ENCODE measurements at regions of chr22 and their contacts with region 1.

Region 1: GRCh38 chr22:35430897-35431322 is 31.0 kb downstream of the MCM5 start:
- DNase-seq: peak; percentile 93
- ATAC-seq: peak; percentile 81
- H3K4me3 Mint-ChIP-seq: no peak overlapping the region
- H3K27ac Mint-ChIP-seq: no peak overlapping the region
- H3K4me1 Mint-ChIP-seq: peaks cover 11% of the 10 kb centered on the region
- H3K27me3 Mint-ChIP-seq: no peaks in the 10 kb centered on the region
- CTCF ChIP-seq: peak; percentile 97

Region 2: DNA sequence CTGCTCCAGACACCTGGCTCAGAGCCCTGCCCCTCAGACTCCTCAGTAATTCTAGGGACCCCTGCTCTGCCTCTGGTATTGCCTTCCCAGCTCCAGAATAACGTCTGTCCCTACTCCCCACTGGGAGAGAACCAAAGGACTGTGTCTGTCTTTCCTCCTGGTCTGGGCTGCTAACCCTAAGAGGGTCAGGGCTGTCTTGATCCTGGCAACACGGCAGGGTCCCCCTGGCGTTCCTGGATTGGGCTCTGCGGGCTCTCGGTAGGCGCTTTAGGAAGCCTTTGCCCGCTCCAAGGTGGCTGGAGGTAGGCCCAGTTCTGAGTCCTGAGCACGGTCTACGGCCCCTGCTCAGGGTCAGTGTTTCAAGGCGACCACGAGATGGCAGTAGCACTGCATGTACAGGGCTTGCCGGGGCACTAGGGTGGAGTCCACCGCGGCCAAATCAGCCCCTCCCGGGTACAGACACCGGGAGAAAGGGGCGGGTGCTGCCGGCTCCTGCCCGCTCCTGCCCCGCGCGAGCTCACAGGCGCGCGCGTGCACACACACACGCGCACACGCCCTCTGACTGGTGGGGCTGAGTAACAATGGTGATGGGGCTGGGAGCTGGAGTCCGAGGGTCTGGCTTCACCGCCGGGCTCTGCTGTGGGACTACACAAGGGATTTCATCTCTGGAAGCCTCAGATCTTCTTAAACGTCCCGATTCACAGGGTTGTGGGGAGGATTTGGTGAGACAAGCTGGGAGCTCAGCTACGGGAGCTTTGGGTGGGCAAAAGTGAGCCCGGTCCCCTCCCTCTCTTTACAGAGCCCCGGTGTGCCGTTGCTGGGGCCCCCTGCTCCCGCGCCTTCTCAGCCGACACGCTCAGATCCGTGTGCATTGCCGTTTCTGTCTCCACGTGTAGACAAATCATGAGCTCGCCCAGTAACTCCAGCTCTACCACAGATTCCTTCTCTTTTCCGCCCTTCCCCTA is 80.1 kb before region 1 on chr22:
- CTCF ChIA-PET with region 1: interaction called, 19 read pairs
- POLR2A ChIA-PET with region 1: no interaction called
- DNase-seq: peak; percentile 94
- ATAC-seq: peak; percentile 92
- H3K4me3 Mint-ChIP-seq: peak overlapping the region; percentile 76
- H3K27ac Mint-ChIP-seq: no peak overlapping the region
- H3K4me1 Mint-ChIP-seq: peaks cover 18% of the 10 kb centered on the region
- H3K27me3 Mint-ChIP-seq: peaks cover 10% of the 10 kb centered on the region; the same call in 1 of the 2 replicates
- CTCF ChIP-seq: peak; percentile 78

Region 3: DNA sequence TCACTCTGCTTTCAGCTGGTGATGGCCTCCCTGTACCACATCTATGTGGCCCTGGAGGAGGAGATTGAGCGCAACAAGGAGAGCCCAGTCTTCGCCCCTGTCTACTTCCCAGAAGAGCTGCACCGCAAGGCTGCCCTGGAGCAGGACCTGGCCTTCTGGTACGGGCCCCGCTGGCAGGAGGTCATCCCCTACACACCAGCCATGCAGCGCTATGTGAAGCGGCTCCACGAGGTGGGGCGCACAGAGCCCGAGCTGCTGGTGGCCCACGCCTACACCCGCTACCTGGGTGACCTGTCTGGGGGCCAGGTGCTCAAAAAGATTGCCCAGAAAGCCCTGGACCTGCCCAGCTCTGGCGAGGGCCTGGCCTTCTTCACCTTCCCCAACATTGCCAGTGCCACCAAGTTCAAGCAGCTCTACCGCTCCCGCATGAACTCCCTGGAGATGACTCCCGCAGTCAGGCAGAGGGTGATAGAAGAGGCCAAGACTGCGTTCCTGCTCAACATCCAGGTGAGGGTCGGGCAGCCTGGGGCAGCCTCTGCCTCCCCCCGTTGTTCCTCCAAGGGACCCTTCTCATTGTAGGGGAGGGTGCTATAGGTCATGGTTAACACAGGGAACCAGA is 44.1 kb before region 1 on chr22:
- CTCF ChIA-PET with region 1: no interaction called
- POLR2A ChIA-PET with region 1: interaction called, 10 read pairs
- DNase-seq: no peak
- ATAC-seq: no peak
- H3K4me3 Mint-ChIP-seq: no peak overlapping the region
- H3K27ac Mint-ChIP-seq: no peak overlapping the region
- H3K4me1 Mint-ChIP-seq: peaks cover 5% of the 10 kb centered on the region
- H3K27me3 Mint-ChIP-seq: no peaks in the 10 kb centered on the region
- CTCF ChIP-seq: no peak

Region 4: GRCh38 chr22:35539910-35540594 is 109.1 kb after region 1 on chr22:
- CTCF ChIA-PET with region 1: interaction called, 21 read pairs
- POLR2A ChIA-PET with region 1: interaction called, 3 read pairs
- DNase-seq: peak; percentile 66
- ATAC-seq: peak; percentile 70
- H3K4me3 Mint-ChIP-seq: peak overlapping the region; percentile 68
- H3K27ac Mint-ChIP-seq: no peak overlapping the region
- H3K4me1 Mint-ChIP-seq: peaks cover 36% of the 10 kb centered on the region
- H3K27me3 Mint-ChIP-seq: peaks cover 32% of the 10 kb centered on the region
- CTCF ChIP-seq: no peak

Region 5: GRCh38 chr22:35575116-35575748 is 144.3 kb after region 1 on chr22:
- CTCF ChIA-PET with region 1: interaction called, 11 read pairs
- POLR2A ChIA-PET with region 1: no interaction called
- DNase-seq: no peak
- ATAC-seq: no peak
- H3K4me3 Mint-ChIP-seq: no peak overlapping the region
- H3K27ac Mint-ChIP-seq: no peak overlapping the region
- H3K4me1 Mint-ChIP-seq: no peaks in the 10 kb centered on the region
- H3K27me3 Mint-ChIP-seq: no peaks in the 10 kb centered on the region
- CTCF ChIP-seq: no peak

Region 6: GRCh38 chr22:35622191-35622913 is 191.4 kb after region 1 on chr22:
- CTCF ChIA-PET with region 1: interaction called, 25 read pairs
- POLR2A ChIA-PET with region 1: no interaction called
- DNase-seq: peak; percentile 63
- ATAC-seq: peak; percentile 50
- H3K4me3 Mint-ChIP-seq: no peak overlapping the region
- H3K27ac Mint-ChIP-seq: no peak overlapping the region
- H3K4me1 Mint-ChIP-seq: peaks cover 16% of the 10 kb centered on the region
- H3K27me3 Mint-ChIP-seq: no peaks in the 10 kb centered on the region
- CTCF ChIP-seq: no peak

Region 7: GRCh38 chr22:35648066-35649025 is 217.4 kb after region 1 on chr22 and contains the start of gene APOL6:
- CTCF ChIA-PET with region 1: no interaction called
- POLR2A ChIA-PET with region 1: no interaction called
- DNase-seq: no peak
- ATAC-seq: peak; percentile 61
- H3K4me3 Mint-ChIP-seq: no peak within 1 kb of the TSS
- H3K27ac Mint-ChIP-seq: peak within 1 kb of the TSS; percentile 69; the same call in 1 of the 2 replicates
- H3K4me1 Mint-ChIP-seq: peaks cover 17% of the 10 kb centered on the region
- H3K27me3 Mint-ChIP-seq: peaks cover 5% of the 10 kb centered on the region
- CTCF ChIP-seq: no peak
- total RNA-seq, gene APOL6: 0.17 to 0.27 TPM (median 0.21 TPM) in 3 replicates